AG04450 (cell line): ENCODE measurements at regions of chr14 and their contacts with region 1.

Region 1: DNA sequence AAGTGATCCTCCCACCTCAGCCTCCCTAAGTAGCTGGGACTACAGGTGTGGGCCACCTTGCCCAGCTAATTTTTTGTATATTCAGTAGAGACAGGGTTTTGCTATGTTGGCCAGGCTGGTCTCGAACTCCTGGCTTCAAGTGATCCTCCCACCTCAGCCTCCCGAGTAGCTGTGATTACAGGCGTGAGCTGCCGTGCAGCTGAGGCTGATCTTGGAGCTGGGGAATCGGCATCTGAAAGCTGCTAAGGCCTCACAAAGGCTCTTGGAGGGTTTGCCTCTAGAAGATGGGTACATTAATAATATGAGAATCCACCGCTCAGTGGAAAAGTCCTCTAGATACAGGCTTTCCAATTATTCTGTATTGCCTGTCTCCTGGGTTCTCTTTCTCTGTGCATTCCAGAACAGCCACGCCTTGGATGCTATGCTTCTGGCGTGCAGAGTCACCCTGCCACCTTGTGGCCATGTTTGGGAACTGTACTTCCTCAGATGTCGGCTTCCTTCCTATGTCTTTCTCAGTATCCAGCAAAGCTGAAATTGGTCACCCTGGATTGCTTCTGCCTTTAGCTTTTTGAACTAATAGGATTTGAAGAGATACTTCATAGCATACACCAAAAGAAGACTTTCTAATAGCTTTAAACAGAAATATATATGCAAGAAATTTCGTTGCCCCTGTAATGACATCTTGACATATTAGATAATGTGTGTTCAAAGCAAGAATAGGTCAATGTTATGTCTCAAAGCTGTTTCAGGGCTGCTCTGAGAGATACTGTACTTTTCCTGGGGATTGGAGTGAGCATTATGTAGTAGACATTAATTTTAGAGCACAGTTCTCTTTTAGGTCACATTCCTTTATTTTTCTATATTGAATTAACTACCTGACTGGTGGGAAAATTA is 75.4 kb downstream of the SNAPC1 start:
- DNase-seq: peak; percentile 55
- H3K4me3 ChIP-seq: no peak overlapping the region
- H3K27ac ChIP-seq: no peak overlapping the region
- H3K27me3 ChIP-seq: peaks cover 2% of the 10 kb centered on the region
- CTCF ChIP-seq: peak; percentile 94

Region 2: DNA sequence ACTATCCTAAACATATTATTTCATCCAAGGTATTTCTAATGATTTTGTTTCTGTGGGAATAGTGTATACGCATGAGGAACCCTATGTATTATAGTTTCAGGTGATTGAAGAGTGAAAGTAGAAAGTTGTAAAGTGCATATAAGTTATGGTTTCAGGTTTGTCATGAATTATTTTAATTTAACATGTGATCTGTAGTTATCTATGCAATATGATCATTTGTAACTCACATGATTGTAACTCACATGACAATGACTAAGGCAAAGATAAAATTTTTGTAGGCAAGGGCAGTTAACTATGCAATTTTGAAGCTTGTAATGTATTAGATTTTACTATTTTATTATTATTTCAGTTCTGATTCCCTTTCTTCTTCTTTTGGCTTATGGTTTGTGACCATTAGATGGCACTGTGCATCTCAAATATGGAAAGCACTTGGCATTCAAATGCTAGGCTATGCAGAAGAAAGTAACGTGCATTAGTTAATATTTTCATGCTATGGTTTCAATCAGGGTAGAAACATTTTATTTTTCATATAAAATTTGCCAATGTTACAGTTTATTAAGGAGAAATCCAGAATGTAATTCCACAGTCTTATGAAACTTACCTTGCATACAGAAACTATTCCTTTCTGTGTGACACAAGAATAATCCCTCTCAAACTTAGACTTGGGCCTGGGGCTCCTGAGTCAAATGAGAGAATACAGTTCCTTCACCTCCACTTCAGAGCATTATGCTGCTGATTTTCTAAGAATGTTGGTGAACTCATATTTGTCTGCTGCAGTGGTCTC is 540.7 kb before region 1 on chr14:
- CTCF ChIA-PET with region 1: interaction called, 31 read pairs
- POLR2A ChIA-PET with region 1: no interaction called
- DNase-seq: no peak
- H3K4me3 ChIP-seq: no peak overlapping the region
- H3K27ac ChIP-seq: no peak overlapping the region
- H3K27me3 ChIP-seq: peaks cover 2% of the 10 kb centered on the region
- CTCF ChIP-seq: peak; percentile 76

Region 3: GRCh38 chr14:61461808-61462275 is 375.7 kb before region 1 on chr14:
- CTCF ChIA-PET with region 1: interaction called, 79 read pairs
- POLR2A ChIA-PET with region 1: no interaction called
- DNase-seq: peak; percentile 64
- H3K4me3 ChIP-seq: no peak overlapping the region
- H3K27ac ChIP-seq: no peak overlapping the region
- H3K27me3 ChIP-seq: peaks cover 2% of the 10 kb centered on the region
- CTCF ChIP-seq: peak; percentile 63

Region 4: DNA sequence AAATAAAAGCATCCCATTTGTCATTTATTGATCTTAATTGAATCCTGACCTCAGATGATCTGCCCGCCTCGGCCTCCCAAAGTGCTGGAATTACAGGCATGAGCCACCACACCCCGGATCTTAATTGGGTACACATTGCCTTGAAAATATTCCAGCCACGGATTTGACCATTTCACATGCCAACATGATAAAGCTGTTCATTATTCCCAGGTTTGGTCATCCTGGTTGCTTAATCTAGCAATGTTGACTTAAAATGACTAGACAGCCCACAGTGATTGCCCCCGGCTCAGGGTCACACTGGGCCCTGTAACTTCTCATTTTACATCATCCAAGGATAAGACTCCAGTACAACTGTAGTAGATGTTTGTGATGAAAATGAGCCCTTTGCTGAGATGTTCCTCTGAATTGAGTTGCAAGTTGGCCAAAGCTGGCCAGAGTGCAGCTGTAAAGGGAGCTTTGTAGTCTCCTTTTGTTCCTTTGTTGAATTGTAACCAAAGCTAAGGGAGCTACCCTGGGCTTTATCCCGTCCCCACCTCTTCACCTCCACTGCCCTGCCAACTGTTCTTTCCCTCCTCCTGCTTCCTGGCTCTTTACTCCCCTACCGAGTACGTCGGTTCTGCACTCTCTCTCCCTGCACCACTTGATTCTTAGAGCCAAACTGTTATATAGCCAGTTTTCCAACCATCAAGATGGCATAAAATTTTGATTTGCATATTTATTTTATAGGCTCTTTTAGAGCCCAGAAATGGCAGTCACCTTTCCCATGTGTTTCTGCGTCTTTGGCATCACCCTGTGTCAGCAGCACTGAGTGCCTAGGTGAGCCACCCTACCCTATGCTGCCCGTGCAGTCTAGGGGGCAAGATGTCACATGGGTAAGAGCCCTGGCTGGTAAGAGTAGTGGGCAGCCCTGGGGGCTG is 283.6 kb before region 1 on chr14:
- CTCF ChIA-PET with region 1: no interaction called
- POLR2A ChIA-PET with region 1: no interaction called
- DNase-seq: peak; percentile 85
- H3K4me3 ChIP-seq: no peak overlapping the region
- H3K27ac ChIP-seq: peak overlapping the region; percentile 78
- H3K27me3 ChIP-seq: no peaks in the 10 kb centered on the region
- CTCF ChIP-seq: no peak

Region 5: DNA sequence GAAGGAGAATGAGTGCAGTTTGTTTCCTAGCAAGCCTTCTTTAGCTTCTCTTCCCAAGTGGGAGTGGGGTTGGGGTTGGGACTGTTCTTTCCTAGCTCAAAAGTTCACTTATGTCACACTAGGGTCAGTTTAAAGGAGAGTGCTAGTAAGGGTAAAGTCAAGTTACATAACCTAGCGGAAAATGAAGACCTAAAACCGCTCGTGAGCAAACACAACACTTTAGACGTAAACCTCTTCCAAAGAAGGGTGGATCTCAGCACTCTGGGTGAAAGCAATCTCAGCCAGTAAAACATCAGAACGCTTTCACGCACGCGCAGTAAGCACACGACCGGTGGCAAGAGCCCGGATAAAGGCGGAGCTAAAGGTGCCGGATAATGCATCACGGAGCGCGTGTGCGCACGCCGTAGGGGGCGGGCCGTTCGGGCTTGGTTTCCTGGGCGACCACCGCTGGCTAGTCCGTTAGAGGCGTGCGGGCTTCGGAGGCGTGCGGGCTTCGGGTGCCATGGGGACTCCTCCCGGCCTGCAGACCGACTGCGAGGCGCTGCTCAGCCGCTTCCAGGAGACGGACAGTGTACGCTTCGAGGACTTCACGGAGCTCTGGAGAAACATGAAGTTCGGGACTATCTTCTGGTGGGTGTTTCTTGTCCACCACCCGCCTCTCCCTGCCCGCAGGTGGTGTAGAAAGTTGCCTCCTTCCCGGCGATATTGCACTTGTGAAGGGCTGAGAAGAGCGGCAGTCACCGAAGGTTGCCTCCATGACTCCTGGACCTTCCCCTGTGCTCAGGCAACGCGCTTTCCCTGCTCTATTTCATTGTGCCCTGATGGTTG is 75.4 kb before region 1 on chr14 and contains the start of gene SNAPC1:
- CTCF ChIA-PET with region 1: interaction called, 10 read pairs
- POLR2A ChIA-PET with region 1: no interaction called
- DNase-seq: peak; percentile 97
- H3K4me3 ChIP-seq: peak within 1 kb of the TSS; percentile 95
- H3K27ac ChIP-seq: peak within 1 kb of the TSS; percentile 58
- H3K27me3 ChIP-seq: no peaks in the 10 kb centered on the region
- CTCF ChIP-seq: no peak
- polyA plus RNA-seq, gene SNAPC1: 11.3 and 18.6 TPM in 2 replicates

Region 6: GRCh38 chr14:61812761-61813606 is 24.6 kb before region 1 on chr14:
- CTCF ChIA-PET with region 1: interaction called, 16 read pairs
- POLR2A ChIA-PET with region 1: no interaction called
- DNase-seq: no peak
- H3K4me3 ChIP-seq: peak overlapping the region; percentile 60
- H3K27ac ChIP-seq: no peak overlapping the region
- H3K27me3 ChIP-seq: peaks cover 29% of the 10 kb centered on the region
- CTCF ChIP-seq: no peak

Region 7: GRCh38 chr14:62381311-62382070 is 543.9 kb after region 1 on chr14:
- CTCF ChIA-PET with region 1: no interaction called
- POLR2A ChIA-PET with region 1: no interaction called
- DNase-seq: no peak
- H3K4me3 ChIP-seq: no peak overlapping the region
- H3K27ac ChIP-seq: no peak overlapping the region
- H3K27me3 ChIP-seq: no peaks in the 10 kb centered on the region
- CTCF ChIP-seq: no peak